Psoas muscle (tissue), 8 donors: ENCODE measurements at regions of chr15 and their contacts with region 1.

Region 1: GRCh38 chr15:31215490-31216214 is 111.0 kb upstream of the KLF13 start:
- DNase-seq: peak; percentile 76 to 93
- ATAC-seq: peak; percentile 88 to 89 (median 88)
- H3K4me3 ChIP-seq: peak overlapping the region; percentile 72
- H3K27ac ChIP-seq: peak overlapping the region; percentile 88
- H3K4me1 ChIP-seq: peaks cover 10% of the 10 kb centered on the region
- H3K27me3 ChIP-seq: no peaks in the 10 kb centered on the region
- CTCF ChIP-seq: peak; percentile 76

Region 2: GRCh38 chr15:31195871-31196270 is 19.8 kb before region 1 on chr15:
- intact Hi-C with region 1: no loop called
- DNase-seq: no peak
- ATAC-seq: no peak
- H3K4me3 ChIP-seq: no peak overlapping the region
- H3K27ac ChIP-seq: no peak overlapping the region
- H3K4me1 ChIP-seq: no peaks in the 10 kb centered on the region
- H3K27me3 ChIP-seq: no peaks in the 10 kb centered on the region
- CTCF ChIP-seq: no peak

Region 3: GRCh38 chr15:31265871-31266711 is 50.4 kb after region 1 on chr15:
- intact Hi-C with region 1: loop called in 1 of 2 experiments (anchors 5 kb)
- DNase-seq: peak in 1 of 2 donors; percentile 59
- ATAC-seq: peak in 1 of 4 donors; percentile 32
- H3K4me3 ChIP-seq: no peak overlapping the region
- H3K27ac ChIP-seq: no peak overlapping the region
- H3K4me1 ChIP-seq: peaks cover 16% of the 10 kb centered on the region
- H3K27me3 ChIP-seq: no peaks in the 10 kb centered on the region
- CTCF ChIP-seq: no peak

Region 4: DNA sequence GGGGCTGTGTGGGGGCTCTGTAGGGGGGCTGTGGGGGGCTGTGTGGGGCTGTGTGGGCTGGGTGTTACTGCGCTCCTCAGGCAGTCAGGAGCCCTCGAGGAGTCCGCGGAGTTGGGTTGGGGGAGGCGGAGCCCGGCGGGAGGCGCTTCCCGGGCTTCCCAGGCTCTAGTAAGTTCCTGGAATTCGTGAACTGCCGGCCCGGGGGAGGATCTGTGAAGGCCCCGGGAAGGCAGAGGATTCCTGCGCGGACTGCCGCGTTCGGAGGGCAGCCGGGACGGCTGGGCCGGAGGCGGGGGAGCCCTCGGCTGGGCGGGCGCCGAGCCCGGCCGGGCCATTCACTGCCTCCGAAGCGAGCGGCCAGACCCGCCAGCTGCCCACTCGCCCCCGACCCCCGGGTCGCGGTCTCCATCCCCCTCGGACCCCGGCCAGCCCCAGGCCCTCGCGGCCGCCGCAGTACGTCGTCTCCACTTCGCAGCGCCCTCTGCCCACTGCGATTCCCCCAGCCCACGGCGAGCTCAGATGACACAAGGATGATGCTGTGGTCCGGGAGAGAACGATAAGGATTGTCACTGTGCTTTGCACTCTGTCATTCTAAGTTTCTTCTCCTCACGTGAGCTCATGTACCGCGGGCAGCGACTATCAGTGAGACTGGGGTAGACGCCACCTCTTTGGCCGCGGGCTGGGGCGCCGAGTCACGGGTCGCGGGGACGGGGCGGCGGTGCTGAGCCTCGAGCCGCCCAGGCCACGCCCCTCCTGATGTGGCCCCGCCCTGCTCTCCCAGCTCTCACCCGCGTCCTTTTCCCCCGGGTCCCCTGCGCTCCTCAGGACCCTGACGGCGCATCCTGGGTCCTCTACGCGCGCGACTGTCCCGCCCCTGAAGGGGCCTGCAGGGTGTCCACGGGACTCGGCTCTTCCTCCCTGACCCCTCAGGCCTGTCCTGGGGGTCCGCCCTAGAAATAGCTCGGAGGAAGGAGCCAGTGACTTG is 176.3 kb after region 1 on chr15:
- intact Hi-C with region 1: loop called in 1 of 2 experiments (anchors 5 kb)
- DNase-seq: peak; percentile 78 to 94
- ATAC-seq: peak; percentile 63 to 76 (median 67)
- H3K4me3 ChIP-seq: peak overlapping the region; percentile 86
- H3K27ac ChIP-seq: peak overlapping the region; percentile 80
- H3K4me1 ChIP-seq: peaks cover 8% of the 10 kb centered on the region
- H3K27me3 ChIP-seq: no peaks in the 10 kb centered on the region
- CTCF ChIP-seq: no peak

Region 5: GRCh38 chr15:31402511-31403056 is 186.9 kb after region 1 on chr15:
- intact Hi-C with region 1: loop called in 1 of 2 experiments (anchors 10 kb)
- DNase-seq: peak in 1 of 2 donors; percentile 83
- ATAC-seq: peak in 1 of 4 donors; percentile 54
- H3K4me3 ChIP-seq: no peak overlapping the region
- H3K27ac ChIP-seq: peak overlapping the region; percentile 17
- H3K4me1 ChIP-seq: peaks cover 11% of the 10 kb centered on the region
- H3K27me3 ChIP-seq: peaks cover 0 to 2% (median 0%) of the 10 kb centered on the region in 3 donors
- CTCF ChIP-seq: no peak